ENCODE measurements at regions of chr5 and their contacts with region 1.

Region 1: DNA sequence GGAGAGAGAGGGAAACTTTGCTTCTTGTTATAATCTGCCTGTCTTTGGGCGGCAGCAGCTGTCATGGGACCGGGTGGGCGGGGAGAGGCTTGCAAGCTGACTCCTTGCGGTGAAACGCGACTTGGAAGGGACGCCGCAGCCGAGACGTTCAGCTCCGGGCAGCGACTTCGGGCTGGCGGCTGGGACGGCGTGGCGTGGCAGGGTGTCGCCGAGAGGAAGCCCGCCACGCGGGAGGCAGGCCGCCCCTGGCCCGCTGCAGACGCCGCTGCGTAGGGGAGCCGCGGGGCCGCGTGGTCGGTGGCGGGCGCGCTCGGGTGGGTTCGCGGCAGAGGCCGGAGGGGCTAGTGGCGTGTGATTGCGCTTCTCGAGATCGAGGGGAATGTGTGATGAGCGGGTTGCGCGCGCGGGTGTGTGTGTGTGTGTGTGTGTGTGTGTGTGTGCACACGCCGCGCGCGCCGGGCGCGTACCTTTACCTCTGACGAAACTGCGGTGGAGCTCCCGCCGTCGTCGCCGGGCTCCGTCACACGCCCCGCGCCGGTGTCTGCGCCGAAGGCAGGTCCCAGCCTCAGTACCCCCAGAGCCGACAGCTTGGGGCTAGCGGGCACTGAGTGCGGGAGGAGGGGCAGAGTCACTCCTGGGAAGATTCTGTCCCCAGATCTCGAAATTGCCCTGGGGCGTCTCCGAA is 1.7 kb downstream of the PPARGC1B start:
- DNase-seq: peak; percentile 88
- ATAC-seq: peak; percentile 71 to 83

Region 2: GRCh38 chr5:149392718-149393117 is 339.1 kb before region 1 on chr5:
- intact Hi-C with region 1: no loop called
- DNase-seq: no peak
- ATAC-seq: no peak

Region 3: DNA sequence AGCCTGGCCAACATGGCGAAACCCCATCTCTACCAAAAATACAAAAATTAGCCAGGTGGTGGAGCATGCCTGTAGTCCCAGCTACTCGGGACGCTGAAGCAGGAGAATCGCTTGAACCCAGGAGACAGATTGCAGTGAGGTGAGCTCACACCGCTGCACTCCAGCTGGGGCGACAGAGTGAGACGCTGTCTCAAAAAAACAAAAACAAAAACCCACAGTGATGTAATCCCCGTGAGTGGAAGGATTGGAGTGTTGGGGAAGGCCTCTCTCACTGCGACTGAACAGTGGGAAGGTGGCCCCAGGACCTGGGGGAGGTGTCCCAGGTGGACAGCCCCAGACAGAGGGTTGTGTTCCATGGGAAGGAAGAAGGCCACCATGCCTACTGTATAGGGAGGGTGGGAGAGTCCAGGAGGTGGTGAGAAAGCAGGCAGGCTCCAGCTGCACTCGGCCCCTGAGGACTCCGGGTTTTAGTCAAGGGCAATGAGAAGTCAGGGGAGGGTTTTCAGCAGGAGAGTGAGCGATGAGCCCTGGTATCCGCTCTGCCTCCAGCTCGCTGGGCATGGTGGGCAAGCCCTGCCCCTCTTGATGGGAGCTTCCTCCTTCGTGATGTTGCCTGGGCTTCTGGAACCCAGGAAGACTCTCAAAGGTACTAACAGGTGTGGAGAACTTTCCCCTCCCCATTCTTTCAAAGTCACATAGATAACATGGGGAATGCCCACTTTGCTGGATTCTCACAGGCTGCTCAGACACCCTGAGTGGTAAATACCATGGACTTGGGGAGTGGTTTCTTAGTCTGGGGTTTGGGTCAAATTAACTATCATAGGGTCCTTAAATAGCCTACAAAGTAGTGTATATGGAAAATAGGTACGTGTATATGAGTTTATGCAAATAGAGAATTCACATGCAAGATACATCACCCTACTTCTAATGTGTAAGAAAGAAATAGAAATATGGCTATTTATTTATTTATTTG is 73.0 kb after region 1 on chr5:
- intact Hi-C with region 1: loop called in 1 of 2 experiments (anchors 5 kb)
- DNase-seq: no peak
- ATAC-seq: no peak

Region 4: GRCh38 chr5:150469718-150470469 is 738.1 kb after region 1 on chr5:
- intact Hi-C with region 1: no loop called
- DNase-seq: no peak
- ATAC-seq: peak in 1 of 2 donors; percentile 28